ENCODE measurements at regions of chr18 and their contacts with region 1.

Region 1: DNA sequence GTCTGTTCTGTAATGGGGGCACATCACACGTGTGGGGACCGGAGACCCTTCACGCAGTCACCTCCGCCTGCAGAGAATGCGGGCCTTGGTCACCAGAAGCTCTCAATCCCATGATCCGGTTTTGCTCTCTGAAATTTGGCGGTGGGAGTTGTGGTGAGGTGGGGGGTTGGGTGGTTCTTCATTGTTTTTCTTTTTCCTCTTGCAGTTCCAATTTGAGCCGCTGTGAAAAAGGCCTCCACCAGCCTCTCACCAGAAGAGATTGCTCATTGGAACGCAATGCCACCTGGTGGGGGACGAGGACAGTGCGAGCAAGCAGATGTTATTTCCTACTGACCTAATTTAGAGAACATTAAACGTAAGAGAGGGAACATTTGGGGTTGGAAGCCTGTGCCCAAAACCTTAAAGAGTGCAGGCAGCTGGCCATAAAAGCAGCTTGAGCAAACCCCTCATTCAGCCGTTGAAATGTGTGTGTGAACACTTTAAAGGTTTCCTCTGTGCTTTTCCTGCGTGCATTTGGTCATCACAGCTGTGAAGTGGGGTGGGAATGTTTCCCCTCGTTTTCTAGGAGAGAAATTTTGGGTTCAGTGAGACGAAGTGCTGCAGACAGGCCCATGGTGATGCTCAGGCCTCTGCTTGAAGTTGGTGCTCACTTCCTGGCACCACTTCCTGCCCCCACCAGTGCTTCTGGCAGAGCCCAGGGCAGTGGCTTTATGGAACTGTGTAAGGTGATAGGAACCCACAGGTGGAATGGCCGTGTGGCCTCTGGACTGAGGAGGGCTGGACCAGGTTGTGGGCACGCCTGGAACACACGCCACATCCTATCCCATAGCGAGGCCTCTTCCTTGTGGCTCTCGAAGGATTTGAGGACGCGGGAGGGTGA is 61.7 kb downstream of the ZCCHC2 start:
- DNase-seq: peak; percentile 58
- H3K4me3 ChIP-seq: no peak overlapping the region
- H3K27ac ChIP-seq: no peak overlapping the region
- H3K4me1 ChIP-seq: peaks cover 3% of the 10 kb centered on the region
- CTCF ChIP-seq: peak; percentile 79

Region 2: GRCh38 chr18:62425465-62426195 is 158.9 kb before region 1 on chr18:
- CTCF ChIA-PET with region 1: no interaction called
- POLR2A ChIA-PET with region 1: no interaction called
- intact Hi-C with region 1: loop called (anchors 2 kb)
- DNase-seq: peak; percentile 58
- H3K4me3 ChIP-seq: no peak overlapping the region
- H3K27ac ChIP-seq: no peak overlapping the region
- H3K4me1 ChIP-seq: no peaks in the 10 kb centered on the region
- CTCF ChIP-seq: peak; percentile 77

Region 3: GRCh38 chr18:62529597-62529996 is 54.9 kb before region 1 on chr18:
- CTCF ChIA-PET with region 1: no interaction called
- POLR2A ChIA-PET with region 1: no interaction called
- intact Hi-C with region 1: loop called (anchors 2 kb)
- DNase-seq: no peak
- H3K4me3 ChIP-seq: no peak overlapping the region
- H3K27ac ChIP-seq: no peak overlapping the region
- H3K4me1 ChIP-seq: peaks cover 36% of the 10 kb centered on the region
- CTCF ChIP-seq: no peak

Region 4: DNA sequence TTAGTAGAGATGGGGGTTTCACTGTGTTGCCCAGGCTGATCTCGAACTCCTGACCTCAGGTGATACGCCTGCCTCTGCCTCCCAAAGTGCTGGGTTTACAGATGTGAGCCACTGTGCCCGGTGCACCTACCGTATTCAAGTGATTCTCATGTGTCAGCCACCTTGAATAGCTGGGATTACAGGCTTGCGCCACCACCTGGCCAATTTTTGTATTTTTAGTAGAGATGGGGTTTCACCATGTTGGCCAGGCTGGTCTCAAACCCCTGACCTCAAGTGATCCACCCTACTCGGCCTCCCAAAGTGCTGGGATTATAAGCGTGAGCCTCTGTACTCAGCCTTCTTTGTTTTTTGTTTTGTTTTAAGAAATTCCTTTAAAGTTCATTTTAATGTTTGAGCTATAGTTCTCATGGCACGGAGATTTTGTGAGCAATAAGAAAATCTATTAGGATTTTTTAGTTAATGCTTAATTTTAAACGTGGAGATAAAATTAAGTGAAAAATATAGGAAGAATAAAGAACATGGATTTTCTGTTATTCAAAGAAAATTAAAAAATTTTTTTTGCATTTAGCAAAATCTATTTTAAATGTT is 373.5 kb after region 1 on chr18:
- CTCF ChIA-PET with region 1: interaction called, 3 read pairs
- POLR2A ChIA-PET with region 1: no interaction called
- intact Hi-C with region 1: loop called (anchors 10 kb)
- DNase-seq: peak; percentile 32
- H3K4me3 ChIP-seq: no peak overlapping the region
- H3K27ac ChIP-seq: no peak overlapping the region
- H3K4me1 ChIP-seq: no peaks in the 10 kb centered on the region
- CTCF ChIP-seq: no peak; the same call in none of the 2 replicates

Region 5: GRCh38 chr18:62982600-62983251 is 398.2 kb after region 1 on chr18:
- CTCF ChIA-PET with region 1: no interaction called
- POLR2A ChIA-PET with region 1: interaction called, 4 read pairs
- intact Hi-C with region 1: loop called (anchors 1 kb)
- DNase-seq: peak; percentile 49
- H3K4me3 ChIP-seq: no peak overlapping the region
- H3K27ac ChIP-seq: no peak overlapping the region
- H3K4me1 ChIP-seq: no peaks in the 10 kb centered on the region
- CTCF ChIP-seq: peak; percentile 78